Activated CD8-positive, alpha-beta T cell treated with anti-CD3 and anti-CD28 coated beads, Interleukin-2, amount 10 ng/mL, durations not matched to agents 7 days and 5 days (primary cell): ENCODE measurements at regions of chr20 and their contacts with region 1.

Region 1: GRCh38 chr20:3407771-3408637 is 535 bp upstream of the DNAAF9 start:
- DNase-seq: peak; percentile 76
- ATAC-seq: peak; percentile 79
- H3K4me3 Mint-ChIP-seq: peak overlapping the region; percentile 95
- H3K27ac Mint-ChIP-seq: peak overlapping the region; percentile 92
- H3K4me1 Mint-ChIP-seq: peaks cover 29% of the 10 kb centered on the region
- H3K27me3 Mint-ChIP-seq: peaks cover 20% of the 10 kb centered on the region

Region 2: GRCh38 chr20:3420211-3420707 is 12.3 kb after region 1 on chr20:
- CTCF ChIA-PET with region 1: interaction called, 20 read pairs
- POLR2A ChIA-PET with region 1: interaction called, 19 read pairs
- DNase-seq: peak; percentile 81
- ATAC-seq: peak; percentile 99
- H3K4me3 Mint-ChIP-seq: peak overlapping the region; percentile 43
- H3K27ac Mint-ChIP-seq: peak overlapping the region; percentile 90
- H3K4me1 Mint-ChIP-seq: peaks cover 22% of the 10 kb centered on the region
- H3K27me3 Mint-ChIP-seq: peaks cover 7% of the 10 kb centered on the region

Region 3: GRCh38 chr20:3494223-3494622 is 86.2 kb after region 1 on chr20:
- CTCF ChIA-PET with region 1: no interaction called
- POLR2A ChIA-PET with region 1: no interaction called
- DNase-seq: no peak
- ATAC-seq: no peak
- H3K4me3 Mint-ChIP-seq: no peak overlapping the region
- H3K27ac Mint-ChIP-seq: no peak overlapping the region
- H3K4me1 Mint-ChIP-seq: no peaks in the 10 kb centered on the region
- H3K27me3 Mint-ChIP-seq: no peaks in the 10 kb centered on the region